OCI-LY7 (cell line): ENCODE measurements at regions of chr18 and their contacts with region 1.

Region 1: GRCh38 chr18:33231474-33232317 is 208.8 kb downstream of the CCDC178 start:
- DNase-seq: peak; percentile 74
- H3K4me3 ChIP-seq: no peak overlapping the region
- H3K27ac ChIP-seq: no peak overlapping the region
- H3K4me1 ChIP-seq: no peaks in the 10 kb centered on the region
- CTCF ChIP-seq: peak; percentile 82

Region 2: DNA sequence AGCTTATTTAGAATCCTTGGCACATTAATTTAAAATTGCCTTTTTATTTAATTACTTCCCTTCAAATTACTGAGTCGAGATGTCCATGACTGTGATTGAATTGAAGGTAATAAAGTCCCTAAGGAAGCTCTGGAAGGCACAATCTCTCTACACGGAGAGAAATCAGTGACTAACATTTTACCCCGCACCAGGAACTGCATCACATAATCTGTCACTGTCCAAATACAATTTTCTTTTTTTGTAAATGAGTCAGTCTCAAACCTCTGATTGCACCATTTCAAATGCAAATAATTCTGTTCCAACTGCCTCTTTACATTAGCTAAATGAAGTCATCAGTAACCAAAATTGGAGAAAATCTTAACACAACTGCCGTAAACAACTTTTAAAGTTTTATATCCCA is 103.1 kb before region 1 on chr18:
- CTCF ChIA-PET with region 1: no interaction called
- POLR2A ChIA-PET with region 1: no interaction called
- intact Hi-C with region 1: no loop called
- DNase-seq: no peak
- H3K4me3 ChIP-seq: no peak overlapping the region
- H3K27ac ChIP-seq: no peak overlapping the region
- H3K4me1 ChIP-seq: no peaks in the 10 kb centered on the region
- CTCF ChIP-seq: no peak

Region 3: DNA sequence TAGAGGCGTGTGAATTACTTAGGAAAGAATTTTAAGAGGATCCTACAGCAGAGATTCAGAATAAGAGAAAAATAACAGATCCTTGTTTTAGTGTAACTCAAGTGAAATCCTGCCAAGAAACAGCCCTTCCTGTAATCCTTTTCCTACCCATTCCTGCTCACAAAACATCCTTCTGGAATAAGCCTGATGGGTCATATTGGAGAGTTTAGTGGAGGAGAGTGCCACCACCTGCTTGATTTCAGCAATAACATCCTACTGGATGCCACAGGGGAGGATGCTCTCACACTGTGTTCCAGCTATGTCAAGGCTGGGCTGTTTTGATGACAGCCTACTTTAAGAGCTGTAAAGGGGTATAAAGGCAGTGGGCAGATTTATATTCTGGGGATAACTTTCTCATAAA is 263.6 kb after region 1 on chr18:
- CTCF ChIA-PET with region 1: no interaction called
- POLR2A ChIA-PET with region 1: no interaction called
- intact Hi-C with region 1: loop called (anchors 10 kb)
- DNase-seq: peak; percentile 10
- H3K4me3 ChIP-seq: no peak overlapping the region
- H3K27ac ChIP-seq: no peak overlapping the region
- H3K4me1 ChIP-seq: no peaks in the 10 kb centered on the region
- CTCF ChIP-seq: peak; percentile 54

Region 4: DNA sequence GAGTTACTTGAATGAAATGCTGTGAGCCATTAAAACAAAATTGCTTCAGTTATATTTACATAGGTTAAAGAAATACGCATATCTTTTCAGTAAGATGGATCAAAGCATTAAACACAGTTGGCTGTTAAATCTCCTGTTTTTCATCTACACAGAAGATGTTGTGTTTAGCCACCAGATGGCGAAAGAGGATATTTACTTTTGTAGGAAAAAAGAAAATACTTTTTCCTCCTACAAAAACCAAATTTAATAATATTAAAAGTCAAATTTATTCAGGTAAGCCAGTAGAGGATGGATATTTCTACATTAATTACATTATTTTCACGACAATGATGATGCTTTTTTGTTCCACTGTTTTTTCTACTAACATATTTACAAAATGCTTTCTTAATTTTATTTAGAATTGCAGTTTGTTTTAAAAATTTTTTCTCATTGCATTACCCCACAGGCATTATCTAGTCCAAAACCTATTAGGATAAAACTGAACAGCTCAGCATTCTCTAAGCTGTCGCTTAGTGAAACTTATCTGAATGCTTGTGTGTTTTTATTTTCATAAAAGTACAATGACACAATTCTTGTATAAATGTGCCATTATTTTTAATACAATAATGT is 520.0 kb after region 1 on chr18:
- CTCF ChIA-PET with region 1: no interaction called
- POLR2A ChIA-PET with region 1: no interaction called
- intact Hi-C with region 1: loop called (anchors 10 kb)
- DNase-seq: peak; percentile 46
- H3K4me3 ChIP-seq: no peak overlapping the region
- H3K27ac ChIP-seq: no peak overlapping the region
- H3K4me1 ChIP-seq: peaks cover 6% of the 10 kb centered on the region
- CTCF ChIP-seq: peak; percentile 76

Region 5: DNA sequence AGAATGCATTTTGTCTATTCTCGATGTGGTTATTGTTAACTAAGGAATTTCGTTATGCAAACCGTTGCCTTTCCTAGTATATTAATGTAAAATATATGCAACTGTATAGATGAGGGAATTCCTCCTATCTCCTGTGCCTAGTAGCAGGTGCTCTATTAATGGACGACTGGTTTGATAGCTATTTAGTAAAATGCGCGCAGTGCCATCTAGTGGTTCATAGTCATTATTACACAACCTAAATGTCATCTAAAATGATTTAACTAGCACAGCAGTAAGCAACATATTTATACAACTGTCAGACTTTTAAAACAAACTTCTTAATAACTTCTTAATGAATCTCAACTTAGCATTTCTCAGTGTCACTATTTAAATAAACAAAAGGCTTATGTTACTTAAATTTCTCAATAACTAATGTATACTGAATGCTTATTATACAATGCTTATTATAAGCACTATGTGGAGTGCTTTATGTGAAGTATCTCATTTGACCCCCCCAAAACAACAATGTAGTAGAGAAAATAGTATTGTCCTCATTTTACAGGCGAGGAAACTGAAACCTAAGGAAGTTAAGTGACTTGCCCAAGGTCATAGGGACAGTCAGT is 1556.3 kb after region 1 on chr18:
- CTCF ChIA-PET with region 1: no interaction called
- POLR2A ChIA-PET with region 1: no interaction called
- intact Hi-C with region 1: loop called (anchors 10 kb)
- DNase-seq: peak; percentile 47
- H3K4me3 ChIP-seq: no peak overlapping the region
- H3K27ac ChIP-seq: no peak overlapping the region
- H3K4me1 ChIP-seq: no peaks in the 10 kb centered on the region
- CTCF ChIP-seq: peak; percentile 82